ENCODE measurements at regions of chr19 and their contacts with region 1.

Region 1: GRCh38 chr19:44808463-44809371 is at the start of gene BCAM:
- DNase-seq: no peak
- H3K4me3 ChIP-seq: peak within 1 kb of the TSS; percentile 64
- CTCF ChIP-seq: no peak

Region 2: DNA sequence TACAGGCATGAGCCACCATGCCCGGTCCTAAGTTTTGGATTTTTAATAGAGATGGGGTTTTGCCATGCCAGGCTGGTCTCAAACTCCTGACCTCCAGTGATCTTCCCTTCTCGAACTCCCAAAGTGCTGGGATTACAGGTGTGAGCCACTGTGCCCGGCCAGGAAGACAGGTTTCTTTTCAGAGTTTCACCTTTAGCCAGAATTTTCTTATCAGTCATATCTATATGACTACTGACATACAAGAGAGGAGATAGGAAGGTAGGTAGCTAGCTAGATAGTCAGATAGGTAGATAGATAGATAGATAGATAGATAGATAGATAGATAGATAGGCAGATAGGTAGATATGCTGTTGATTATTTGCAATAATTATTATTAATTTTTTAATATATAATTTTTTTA is 23.5 kb before region 1 on chr19:
- CTCF ChIA-PET with region 1: interaction called, 16 read pairs
- POLR2A ChIA-PET with region 1: no interaction called
- DNase-seq: no peak
- H3K4me3 ChIP-seq: no peak overlapping the region
- CTCF ChIP-seq: no peak